CD4-positive, alpha-beta T cell (primary cell): ENCODE measurements at regions of chr22 and their contacts with region 1.

Region 1: GRCh38 chr22:30947816-30948454 is 20.6 kb downstream of the MORC2 start:
- DNase-seq: peak in 3 of 14 experiments; percentile 60 to 66 (median 65)
- ATAC-seq: peak; percentile 49
- H3K4me3 ChIP-seq: no peak overlapping the region
- H3K4me3 Mint-ChIP-seq: no peak overlapping the region
- H3K27ac ChIP-seq: no peak overlapping the region
- H3K27ac Mint-ChIP-seq: no peak overlapping the region
- H3K4me1 ChIP-seq: peaks cover 39% of the 10 kb centered on the region
- H3K4me1 Mint-ChIP-seq: peaks cover 65% of the 10 kb centered on the region
- H3K27me3 ChIP-seq: no peaks in the 10 kb centered on the region
- H3K27me3 Mint-ChIP-seq: no peaks in the 10 kb centered on the region
- CTCF ChIP-seq: peak; percentile 67

Region 2: GRCh38 chr22:31148953-31149627 is 201.2 kb after region 1 on chr22:
- CTCF ChIA-PET with region 1: no interaction called
- POLR2A ChIA-PET with region 1: no interaction called
- intact Hi-C with region 1: loop called in 1 of 2 experiments (anchors 10 kb)
- DNase-seq: peak in 8 of 14 experiments; percentile 6 to 57 (median 24)
- ATAC-seq: no peak
- H3K4me3 ChIP-seq: no peak overlapping the region
- H3K4me3 Mint-ChIP-seq: no peak overlapping the region
- H3K27ac ChIP-seq: no peak overlapping the region
- H3K27ac Mint-ChIP-seq: no peak overlapping the region
- H3K4me1 ChIP-seq: no peaks in the 10 kb centered on the region
- H3K4me1 Mint-ChIP-seq: no peaks in the 10 kb centered on the region
- H3K27me3 ChIP-seq: peaks cover 0 to 4% of the 10 kb centered on the region in 2 experiments
- H3K27me3 Mint-ChIP-seq: no peaks in the 10 kb centered on the region
- CTCF ChIP-seq: peak; percentile 28